ENCODE measurements at regions of chr14 and their contacts with region 1.

Region 1: DNA sequence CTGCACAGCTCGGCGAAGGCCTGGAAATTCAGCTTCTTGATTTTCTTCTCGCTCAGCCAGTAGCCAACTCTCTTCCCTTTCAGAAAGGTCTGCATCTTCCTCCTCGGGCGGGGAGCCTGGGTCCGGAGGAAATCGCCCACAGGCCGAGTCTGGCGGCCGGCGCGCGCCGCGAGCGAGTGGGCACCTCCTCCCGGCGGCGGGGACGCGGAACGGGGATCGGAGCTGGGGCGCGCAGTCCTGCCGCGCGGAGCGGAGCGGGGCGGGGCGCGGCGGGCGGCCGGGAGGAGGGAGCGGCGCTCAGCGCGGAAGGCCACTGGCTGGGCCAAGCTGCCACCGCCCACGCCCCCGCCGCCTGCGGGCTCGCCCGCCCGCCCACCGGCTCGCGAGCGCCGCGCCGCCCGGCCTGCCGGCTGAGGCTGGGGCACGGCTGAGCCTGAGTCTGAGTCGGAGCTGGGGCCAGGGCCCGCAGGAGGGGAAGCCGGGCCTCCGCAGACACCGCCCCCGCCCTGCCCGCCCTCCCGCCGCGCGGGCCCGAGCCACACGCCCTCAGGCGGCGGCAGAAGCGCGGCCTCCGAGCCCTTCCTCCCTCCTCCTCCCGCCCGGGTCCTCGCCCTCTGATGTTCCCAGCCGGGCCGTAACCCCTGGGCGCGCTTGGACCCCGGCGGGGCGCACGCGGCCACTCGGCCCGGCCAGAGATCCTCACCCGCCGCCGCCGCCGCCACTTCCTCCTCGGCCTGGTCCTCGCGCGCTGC is 480 bp downstream of the ITPK1 start:
- DNase-seq: peak; percentile 86
- ATAC-seq: peak; percentile 80
- H3K4me3 Mint-ChIP-seq: peak overlapping the region; percentile 81
- H3K27ac Mint-ChIP-seq: peak overlapping the region; percentile 77
- H3K4me1 Mint-ChIP-seq: peaks cover 47% of the 10 kb centered on the region
- H3K27me3 Mint-ChIP-seq: no peaks in the 10 kb centered on the region

Region 2: GRCh38 chr14:93023039-93023438 is 92.2 kb before region 1 on chr14:
- CTCF ChIA-PET with region 1: interaction called, 30 read pairs
- POLR2A ChIA-PET with region 1: no interaction called
- DNase-seq: no peak
- ATAC-seq: no peak
- H3K4me3 Mint-ChIP-seq: no peak overlapping the region
- H3K27ac Mint-ChIP-seq: peak overlapping the region; percentile 6
- H3K4me1 Mint-ChIP-seq: peaks cover 41% of the 10 kb centered on the region
- H3K27me3 Mint-ChIP-seq: no peaks in the 10 kb centered on the region

Region 3: DNA sequence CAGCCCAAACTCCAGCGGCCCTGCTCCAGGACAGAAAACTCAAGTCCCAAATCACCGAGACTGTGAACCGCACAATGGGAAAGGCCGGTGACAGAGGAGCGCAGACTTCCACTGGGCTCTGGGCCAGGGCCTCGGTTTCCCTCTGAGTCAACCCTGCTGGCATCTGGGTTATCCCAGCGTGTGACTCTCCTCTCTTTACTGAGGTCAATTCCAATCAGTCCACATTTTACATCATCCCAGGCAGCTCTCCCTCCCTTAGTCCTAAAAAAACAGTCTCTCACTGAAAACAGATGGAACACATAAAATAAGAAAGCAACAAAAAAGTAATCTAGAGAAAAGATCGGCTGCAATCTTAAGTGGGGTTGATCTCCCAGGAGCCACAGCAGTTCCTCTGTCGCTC is 36.4 kb before region 1 on chr14:
- CTCF ChIA-PET with region 1: interaction called, 30 read pairs
- POLR2A ChIA-PET with region 1: interaction called, 3 read pairs
- DNase-seq: no peak
- ATAC-seq: no peak
- H3K4me3 Mint-ChIP-seq: no peak overlapping the region
- H3K27ac Mint-ChIP-seq: peak overlapping the region; percentile 75
- H3K4me1 Mint-ChIP-seq: peaks cover 86% of the 10 kb centered on the region
- H3K27me3 Mint-ChIP-seq: no peaks in the 10 kb centered on the region

Region 4: DNA sequence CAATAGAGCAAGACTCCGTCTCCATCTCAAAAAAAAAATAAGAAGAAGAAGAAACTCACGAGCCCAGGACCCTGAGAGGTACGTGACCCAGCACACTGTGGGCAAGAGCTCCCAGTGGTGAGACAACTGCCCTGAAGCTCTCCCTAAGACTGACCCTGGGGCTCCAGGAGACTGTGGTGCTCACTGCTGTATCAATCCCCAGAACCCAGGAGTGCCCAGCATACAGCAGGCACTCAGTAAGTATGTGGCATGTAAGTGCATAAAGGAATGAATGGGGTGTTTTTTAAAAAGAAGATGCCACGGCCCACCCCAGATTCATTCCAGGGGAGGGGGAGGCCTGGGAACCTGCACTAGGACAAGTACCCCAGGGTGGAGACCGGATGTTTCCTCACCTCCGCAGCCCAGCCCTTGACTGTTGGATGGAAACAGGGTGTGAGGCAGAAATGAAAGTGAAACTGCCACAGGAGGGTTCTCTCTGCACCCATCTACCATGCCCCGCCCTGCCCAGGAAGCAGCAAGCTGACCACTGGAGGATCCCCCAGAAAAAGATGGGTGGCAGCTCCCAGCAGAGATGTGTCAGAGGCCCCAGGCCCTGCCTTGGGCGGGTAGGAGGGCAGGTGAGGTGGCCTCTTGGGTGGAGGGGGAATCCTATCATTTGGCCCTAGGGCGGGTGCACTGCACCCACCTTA is 11.7 kb before region 1 on chr14:
- CTCF ChIA-PET with region 1: interaction called, 145 read pairs
- POLR2A ChIA-PET with region 1: interaction called, 28 read pairs
- DNase-seq: peak; percentile 92
- ATAC-seq: peak; percentile 98
- H3K4me3 Mint-ChIP-seq: peak overlapping the region; percentile 73
- H3K27ac Mint-ChIP-seq: peak overlapping the region; percentile 92
- H3K4me1 Mint-ChIP-seq: peaks cover 70% of the 10 kb centered on the region
- H3K27me3 Mint-ChIP-seq: no peaks in the 10 kb centered on the region

Region 5: DNA sequence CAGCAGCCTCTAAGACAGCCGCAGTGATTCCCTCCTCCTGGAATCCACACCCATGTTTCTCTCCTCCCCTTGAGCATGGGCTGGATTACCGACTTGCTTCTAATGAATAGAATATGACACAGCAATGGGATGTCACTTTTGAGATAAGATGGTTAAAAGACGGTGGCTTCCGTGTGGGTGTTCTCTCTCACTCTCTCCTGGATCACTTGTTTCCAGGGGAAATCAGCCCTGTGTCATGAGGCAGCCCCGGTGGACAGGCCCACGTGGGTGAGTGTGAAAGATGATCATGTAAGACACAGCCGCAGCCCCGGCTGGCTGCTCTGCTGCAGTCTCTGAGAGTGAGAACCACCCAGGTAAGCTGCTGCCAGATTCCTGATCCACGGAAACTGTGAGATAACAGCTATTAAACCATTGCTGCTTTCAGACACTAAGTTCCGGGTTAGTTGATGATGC is 58.7 kb after region 1 on chr14:
- CTCF ChIA-PET with region 1: interaction called, 16 read pairs
- POLR2A ChIA-PET with region 1: no interaction called
- DNase-seq: no peak
- ATAC-seq: no peak
- H3K4me3 Mint-ChIP-seq: no peak overlapping the region
- H3K27ac Mint-ChIP-seq: no peak overlapping the region
- H3K4me1 Mint-ChIP-seq: peaks cover 8% of the 10 kb centered on the region
- H3K27me3 Mint-ChIP-seq: peaks cover 2% of the 10 kb centered on the region

Region 6: DNA sequence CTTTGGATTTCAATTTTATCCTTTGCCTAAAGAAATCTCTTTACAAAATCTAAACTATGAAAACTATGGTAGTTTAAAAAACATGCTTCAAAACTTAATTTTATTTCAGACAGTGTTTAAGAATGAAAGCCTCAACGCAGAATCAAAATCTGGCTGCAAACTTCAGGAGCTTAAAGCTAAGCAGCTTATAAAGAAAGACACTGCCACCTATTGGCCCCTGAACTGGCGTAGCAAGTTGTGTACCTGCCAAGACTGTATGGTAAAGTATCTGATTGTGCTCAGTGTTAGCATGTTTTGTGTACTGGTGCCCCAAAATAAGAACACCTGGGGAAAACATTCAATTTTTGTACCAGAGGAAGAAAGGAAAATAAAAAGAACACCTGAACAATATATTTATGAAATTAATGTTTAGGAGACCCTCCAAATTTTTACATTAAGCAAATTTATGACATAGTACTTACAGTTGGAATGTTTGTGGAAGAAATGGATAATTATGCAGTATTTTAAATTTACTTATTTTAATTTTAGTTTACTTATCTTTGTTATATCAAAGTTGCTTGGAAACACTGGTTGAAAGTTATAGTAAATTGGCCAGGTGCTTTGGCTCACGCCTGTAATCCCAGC is 104.0 kb after region 1 on chr14:
- CTCF ChIA-PET with region 1: interaction called, 34 read pairs
- POLR2A ChIA-PET with region 1: interaction called, 4 read pairs
- DNase-seq: peak; percentile 70
- ATAC-seq: peak; percentile 91
- H3K4me3 Mint-ChIP-seq: no peak overlapping the region
- H3K27ac Mint-ChIP-seq: no peak overlapping the region
- H3K4me1 Mint-ChIP-seq: peaks cover 10% of the 10 kb centered on the region
- H3K27me3 Mint-ChIP-seq: no peaks in the 10 kb centered on the region

Measured in activated CD8-positive, alpha-beta T cell treated with anti-CD3 and anti-CD28 coated beads, Interleukin-2, amount 10 ng/mL, durations not matched to agents 7 days and 5 days (primary cell).